Activated CD8-positive, alpha-beta T cell treated with anti-CD3 and anti-CD28 coated beads for 36 hours (primary cell): ENCODE measurements at regions of chr6 and their contacts with region 1.

Region 1: DNA sequence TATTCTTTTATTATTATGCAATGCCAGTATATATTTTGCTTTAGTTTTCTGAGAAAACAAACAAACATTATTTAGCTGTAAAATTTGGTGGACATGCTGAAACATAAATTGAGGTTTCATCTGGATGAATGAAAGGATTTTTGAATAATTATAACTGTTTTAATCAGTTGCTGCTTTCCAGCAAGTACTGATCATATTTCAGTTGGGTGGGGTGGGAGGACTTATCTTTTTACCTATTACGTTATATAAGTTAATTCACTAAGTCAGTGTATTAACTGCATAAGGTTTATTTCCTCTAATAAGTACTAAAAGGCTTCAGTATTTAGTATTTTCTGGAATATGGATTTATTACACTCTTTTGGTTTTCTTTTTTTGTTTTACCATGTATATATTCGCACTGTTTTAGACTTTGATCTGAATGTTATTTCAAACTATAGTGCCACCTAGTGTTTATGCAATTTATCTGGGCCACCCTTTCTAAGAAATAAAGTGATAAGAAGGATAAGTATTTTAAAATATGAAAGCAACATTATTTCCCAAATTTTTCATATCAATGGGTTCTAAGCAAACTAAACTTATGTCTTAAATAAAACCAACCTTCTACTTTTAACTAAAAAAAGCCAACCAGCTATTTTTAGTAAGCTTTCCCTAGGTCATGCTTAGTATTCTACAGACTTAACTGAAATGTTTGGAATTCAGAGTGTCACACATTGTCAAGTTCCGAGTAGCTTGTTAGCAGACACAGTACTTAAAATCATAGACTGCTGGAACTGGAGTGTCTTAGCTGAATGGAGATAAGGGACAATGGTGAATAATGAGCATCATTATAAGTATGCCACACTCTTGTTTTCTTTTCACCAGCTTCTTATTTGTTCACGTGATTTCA is 105.4 kb upstream of the MCHR2 start:
- DNase-seq: no peak
- ATAC-seq: no peak
- H3K4me3 Mint-ChIP-seq: no peak overlapping the region
- H3K27ac Mint-ChIP-seq: no peak overlapping the region
- H3K4me1 Mint-ChIP-seq: no peaks in the 10 kb centered on the region
- H3K27me3 Mint-ChIP-seq: peaks cover 4% of the 10 kb centered on the region
- CTCF ChIP-seq: peak; percentile 49

Region 2: DNA sequence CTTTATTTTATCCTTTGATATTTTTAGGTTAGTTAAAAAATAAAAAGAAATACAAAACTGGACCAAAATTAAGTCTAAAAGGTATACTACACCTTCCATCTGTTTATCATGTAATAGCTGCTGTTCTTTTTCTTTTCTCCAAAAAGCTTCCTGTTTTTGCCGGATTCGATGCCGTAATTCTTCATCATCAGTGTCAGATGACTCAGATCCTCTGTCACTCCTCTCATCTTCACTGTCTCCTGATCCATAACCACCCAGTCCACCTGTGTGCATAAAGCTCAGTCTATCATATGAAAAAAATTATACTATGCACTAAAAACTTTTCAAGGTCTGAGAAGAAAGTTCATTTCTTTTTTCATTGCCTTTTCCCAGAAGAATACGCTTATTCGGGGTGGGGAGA is 697.0 kb before region 1 on chr6:
- CTCF ChIA-PET with region 1: no interaction called
- POLR2A ChIA-PET with region 1: no interaction called
- intact Hi-C with region 1: no loop called
- DNase-seq: no peak
- ATAC-seq: no peak
- H3K4me3 Mint-ChIP-seq: no peak overlapping the region
- H3K27ac Mint-ChIP-seq: peak overlapping the region; percentile 17
- H3K4me1 Mint-ChIP-seq: no peaks in the 10 kb centered on the region
- H3K27me3 Mint-ChIP-seq: no peaks in the 10 kb centered on the region
- CTCF ChIP-seq: no peak

Region 3: GRCh38 chr6:100001915-100002388 is 97.5 kb before region 1 on chr6:
- CTCF ChIA-PET with region 1: interaction called, 36 read pairs
- POLR2A ChIA-PET with region 1: no interaction called
- intact Hi-C with region 1: loop called (anchors 1 kb)
- DNase-seq: peak; percentile 43
- ATAC-seq: peak; percentile 74
- H3K4me3 Mint-ChIP-seq: no peak overlapping the region
- H3K27ac Mint-ChIP-seq: no peak overlapping the region
- H3K4me1 Mint-ChIP-seq: no peaks in the 10 kb centered on the region
- H3K27me3 Mint-ChIP-seq: peaks cover 18% of the 10 kb centered on the region
- CTCF ChIP-seq: peak; percentile 94

Region 4: GRCh38 chr6:100116411-100117194 is 17.2 kb after region 1 on chr6:
- CTCF ChIA-PET with region 1: interaction called, 18 read pairs
- POLR2A ChIA-PET with region 1: no interaction called
- intact Hi-C with region 1: no loop called
- DNase-seq: peak; percentile 61
- ATAC-seq: no peak
- H3K4me3 Mint-ChIP-seq: no peak overlapping the region
- H3K27ac Mint-ChIP-seq: no peak overlapping the region
- H3K4me1 Mint-ChIP-seq: no peaks in the 10 kb centered on the region
- H3K27me3 Mint-ChIP-seq: peaks cover 11% of the 10 kb centered on the region
- CTCF ChIP-seq: peak; percentile 44